ENCODE measurements at regions of chr2 and their contacts with region 1.

Region 1: GRCh38 chr2:157122776-157123175 is 134.7 kb upstream of the GALNT5 start:
- DNase-seq: no peak
- ATAC-seq: no peak
- H3K4me3 ChIP-seq: no peak overlapping the region
- H3K27ac ChIP-seq: no peak overlapping the region
- H3K4me1 ChIP-seq: no peaks in the 10 kb centered on the region
- H3K27me3 ChIP-seq: no peaks in the 10 kb centered on the region
- CTCF ChIP-seq: no peak

Region 2: GRCh38 chr2:156864325-156864724 is 258.5 kb before region 1 on chr2:
- CTCF ChIA-PET with region 1: no interaction called
- POLR2A ChIA-PET with region 1: no interaction called
- in situ Hi-C with region 1: no loop called
- intact Hi-C with region 1: no loop called
- DNase-seq: no peak
- ATAC-seq: no peak
- H3K4me3 ChIP-seq: no peak overlapping the region
- H3K27ac ChIP-seq: no peak overlapping the region
- H3K4me1 ChIP-seq: no peaks in the 10 kb centered on the region
- H3K27me3 ChIP-seq: no peaks in the 10 kb centered on the region
- CTCF ChIP-seq: no peak

Region 3: GRCh38 chr2:157075924-157076323 is 46.9 kb before region 1 on chr2:
- CTCF ChIA-PET with region 1: no interaction called
- POLR2A ChIA-PET with region 1: interaction called, 13 read pairs
- in situ Hi-C with region 1: no loop called
- intact Hi-C with region 1: no loop called
- DNase-seq: no peak
- ATAC-seq: no peak
- H3K4me3 ChIP-seq: no peak overlapping the region
- H3K27ac ChIP-seq: no peak overlapping the region
- H3K4me1 ChIP-seq: no peaks in the 10 kb centered on the region
- H3K27me3 ChIP-seq: no peaks in the 10 kb centered on the region
- CTCF ChIP-seq: no peak

Region 4: GRCh38 chr2:157480182-157480961 is 357.6 kb after region 1 on chr2:
- CTCF ChIA-PET with region 1: no interaction called
- POLR2A ChIA-PET with region 1: no interaction called
- in situ Hi-C with region 1: no loop called
- intact Hi-C with region 1: no loop called
- DNase-seq: no peak
- ATAC-seq: no peak
- H3K4me3 ChIP-seq: no peak overlapping the region
- H3K27ac ChIP-seq: no peak overlapping the region
- H3K4me1 ChIP-seq: no peaks in the 10 kb centered on the region
- H3K27me3 ChIP-seq: no peaks in the 10 kb centered on the region
- CTCF ChIP-seq: no peak

Measured in Panc1 (cell line).